Activated CD4-positive, alpha-beta T cell treated with anti-CD3 and anti-CD28 coated beads, Interleukin-2, amount 10 ng/mL, durations not matched to agents 24 days and 14 days (primary cell): ENCODE measurements at regions of chr3 and their contacts with region 1.

Region 1: DNA sequence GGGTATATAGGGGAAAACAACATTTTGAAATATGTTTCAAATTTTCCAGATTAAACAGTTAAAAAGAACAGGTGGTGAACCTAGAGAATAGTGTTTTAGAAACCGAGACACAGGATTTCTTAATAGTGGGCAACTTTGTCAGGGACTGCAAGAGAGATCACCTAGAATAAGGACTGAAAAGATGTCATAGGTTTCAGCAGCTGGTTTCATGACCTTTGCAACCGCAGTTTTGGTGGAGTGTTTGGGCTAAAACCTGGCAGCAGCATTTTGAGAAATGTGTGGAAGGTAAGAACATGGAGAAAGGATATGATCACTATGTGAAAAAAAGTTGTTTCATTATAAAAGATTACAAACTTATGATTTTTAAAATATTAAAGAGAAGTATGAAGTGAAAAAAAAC is 34.9 kb downstream of the PRKCI start:
- DNase-seq: no peak
- H3K4me3 Mint-ChIP-seq: peak overlapping the region; percentile 24
- H3K27ac Mint-ChIP-seq: peak overlapping the region; percentile 83
- H3K4me1 Mint-ChIP-seq: peaks cover 40% of the 10 kb centered on the region
- H3K27me3 Mint-ChIP-seq: no peaks in the 10 kb centered on the region

Region 2: GRCh38 chr3:169998568-169999131 is 258.5 kb before region 1 on chr3:
- intact Hi-C with region 1: loop called (anchors 1 kb)
- DNase-seq: no peak
- H3K4me3 Mint-ChIP-seq: no peak overlapping the region
- H3K27ac Mint-ChIP-seq: peak overlapping the region; percentile 25
- H3K4me1 Mint-ChIP-seq: peaks cover 21% of the 10 kb centered on the region
- H3K27me3 Mint-ChIP-seq: no peaks in the 10 kb centered on the region

Region 3: DNA sequence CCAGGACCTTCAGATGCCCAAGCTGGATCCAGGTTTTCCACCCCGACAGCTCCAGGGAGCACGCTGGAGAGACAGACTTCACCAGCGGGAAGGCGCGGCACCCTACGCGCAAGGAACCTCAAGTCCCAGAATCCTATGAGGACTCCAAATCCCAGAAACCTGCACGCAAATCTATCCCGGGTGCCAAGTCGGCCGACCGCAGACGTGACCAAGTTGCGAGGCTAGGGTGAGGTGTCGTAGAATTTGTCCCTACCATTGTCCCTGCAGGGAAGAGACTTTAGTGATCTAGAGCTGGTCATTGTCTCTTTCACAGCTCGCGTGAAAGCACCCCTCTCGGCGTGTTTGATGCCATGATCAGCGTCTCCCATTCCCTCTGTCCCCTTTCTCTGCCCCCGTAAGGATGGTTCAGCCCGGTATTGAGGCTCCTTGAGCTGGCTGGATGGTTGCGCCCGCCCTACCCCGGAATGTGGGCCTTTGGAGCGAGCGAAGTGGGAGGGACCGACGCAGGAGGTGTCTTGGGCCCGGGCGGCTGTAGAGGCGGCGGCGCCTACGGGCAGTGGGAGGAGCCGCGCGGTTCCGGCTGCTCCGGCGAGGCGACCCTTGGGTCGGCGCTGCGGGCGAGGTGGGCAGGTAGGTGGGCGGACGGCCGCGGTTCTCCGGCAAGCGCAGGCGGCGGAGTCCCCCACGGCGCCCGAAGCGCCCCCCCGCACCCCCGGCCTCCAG is 35.1 kb before region 1 on chr3 and contains the start of gene PRKCI:
- intact Hi-C with region 1: loop called (anchors 1 kb)
- DNase-seq: peak; percentile 96
- H3K4me3 Mint-ChIP-seq: peak within 1 kb of the TSS; percentile 89
- H3K27ac Mint-ChIP-seq: peak within 1 kb of the TSS; percentile 94
- H3K4me1 Mint-ChIP-seq: peaks cover 23% of the 10 kb centered on the region
- H3K27me3 Mint-ChIP-seq: peaks cover 4% of the 10 kb centered on the region
- total RNA-seq, gene PRKCI: 19.7 and 32.3 TPM in 2 replicates

Region 4: DNA sequence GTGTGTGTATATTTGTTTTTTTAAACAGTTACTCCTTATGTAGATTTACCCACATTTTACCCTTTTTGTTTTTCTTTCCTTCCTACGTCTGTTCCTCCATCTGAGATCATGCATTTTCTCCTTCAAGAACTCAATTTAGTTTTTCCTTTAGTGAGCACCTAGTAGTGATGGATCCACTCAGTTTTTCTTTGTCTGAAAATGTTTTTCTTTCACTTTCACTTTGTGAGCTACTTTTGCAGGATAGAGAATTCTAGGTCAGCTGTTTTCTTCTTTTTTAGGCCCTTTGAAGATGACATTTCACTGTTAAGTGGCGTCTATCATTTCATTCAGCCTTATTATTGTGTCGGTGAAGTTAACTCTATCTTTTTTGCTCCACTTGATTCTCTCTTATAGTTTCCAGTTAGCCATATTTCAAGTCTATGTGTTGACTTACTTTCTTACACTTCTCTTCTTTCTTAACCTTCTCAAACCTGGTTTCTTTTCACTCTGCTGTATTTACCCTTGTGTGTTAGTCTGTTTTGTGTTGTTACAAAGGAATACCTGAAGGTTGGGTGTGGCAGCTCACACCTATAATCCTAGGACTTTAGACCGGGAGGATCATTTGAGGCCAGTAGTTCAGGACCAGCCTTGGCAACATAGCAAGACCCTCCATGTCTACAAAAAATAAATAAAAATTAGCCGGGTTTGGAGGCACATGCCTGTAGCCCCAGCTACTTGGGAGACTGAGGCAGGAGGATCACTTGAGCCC is 20.9 kb after region 1 on chr3:
- intact Hi-C with region 1: loop called (anchors 2 kb)
- DNase-seq: no peak
- H3K4me3 Mint-ChIP-seq: peak overlapping the region; percentile 81
- H3K27ac Mint-ChIP-seq: peak overlapping the region; percentile 82
- H3K4me1 Mint-ChIP-seq: peaks cover 19% of the 10 kb centered on the region
- H3K27me3 Mint-ChIP-seq: no peaks in the 10 kb centered on the region

Region 5: DNA sequence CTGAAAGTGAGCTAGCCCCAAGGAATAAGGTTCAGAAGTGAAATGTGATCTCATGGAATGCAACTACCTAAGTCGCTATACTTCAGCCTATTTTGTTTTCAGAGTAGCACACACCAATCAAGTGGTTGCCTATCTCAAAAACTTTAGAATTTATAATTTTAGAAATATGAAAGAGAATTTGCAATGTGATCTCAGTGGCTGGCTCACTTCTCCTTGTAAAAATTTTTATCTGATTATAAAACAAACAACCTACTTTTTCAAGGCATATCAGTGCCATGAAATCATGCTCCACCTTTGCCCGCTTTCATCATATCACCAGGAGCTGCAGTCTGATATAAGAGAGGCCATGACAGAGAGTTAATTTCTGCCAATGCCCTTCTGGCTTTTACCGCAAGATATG is 208.8 kb after region 1 on chr3:
- intact Hi-C with region 1: no loop called
- DNase-seq: no peak
- H3K4me3 Mint-ChIP-seq: no peak overlapping the region
- H3K27ac Mint-ChIP-seq: no peak overlapping the region
- H3K4me1 Mint-ChIP-seq: peaks cover 3% of the 10 kb centered on the region
- H3K27me3 Mint-ChIP-seq: peaks cover 30% of the 10 kb centered on the region